Transverse colon (tissue), 4 donors: ENCODE measurements at regions of chr2 and their contacts with region 1.

Region 1: GRCh38 chr2:191885650-191886049 is 38.8 kb upstream of the CAVIN2 start:
- DNase-seq: no peak
- H3K4me3 ChIP-seq: no peak overlapping the region
- H3K27ac ChIP-seq: peak overlapping the region in 3 of 4 donors; percentile 6 to 33 (median 31)
- H3K4me1 ChIP-seq: peaks cover 0 to 11% (median 6%) of the 10 kb centered on the region in 4 donors
- H3K27me3 ChIP-seq: no peaks in the 10 kb centered on the region
- CTCF ChIP-seq: no peak
- EP300 ChIP-seq: no peak
- POLR2A ChIP-seq: no peak

Region 2: GRCh38 chr2:191389288-191389687 is 496.4 kb before region 1 on chr2:
- in situ Hi-C with region 1: no loop called
- intact Hi-C with region 1: no loop called
- DNase-seq: no peak
- H3K4me3 ChIP-seq: no peak overlapping the region
- H3K27ac ChIP-seq: no peak overlapping the region
- H3K4me1 ChIP-seq: no peaks in the 10 kb centered on the region
- H3K27me3 ChIP-seq: no peaks in the 10 kb centered on the region
- CTCF ChIP-seq: no peak
- EP300 ChIP-seq: no peak
- POLR2A ChIP-seq: no peak

Region 3: GRCh38 chr2:191818725-191819350 is 66.8 kb before region 1 on chr2:
- in situ Hi-C with region 1: no loop called
- intact Hi-C with region 1: loop called (anchors 2 kb)
- DNase-seq: no peak
- H3K4me3 ChIP-seq: no peak overlapping the region
- H3K27ac ChIP-seq: no peak overlapping the region
- H3K4me1 ChIP-seq: no peaks in the 10 kb centered on the region
- H3K27me3 ChIP-seq: no peaks in the 10 kb centered on the region
- CTCF ChIP-seq: no peak
- EP300 ChIP-seq: no peak
- POLR2A ChIP-seq: no peak